ENCODE measurements at regions of chr2 and their contacts with region 1.

Region 1: GRCh38 chr2:85327822-85328617 is at the start of gene TGOLN2:
- DNase-seq: peak; percentile 93 to 96 (median 95)
- H3K4me3 ChIP-seq: peak within 1 kb of the TSS; percentile 99 to 100
- H3K4me3 Mint-ChIP-seq: peak within 1 kb of the TSS; percentile 92 to 100 (median 98)
- H3K27ac ChIP-seq: peak within 1 kb of the TSS; percentile 98
- H3K27ac Mint-ChIP-seq: peak within 1 kb of the TSS; percentile 97 to 100 (median 100)
- H3K4me1 ChIP-seq: peaks cover 44% of the 10 kb centered on the region
- H3K4me1 Mint-ChIP-seq: peaks cover 21 to 65% (median 34%) of the 10 kb centered on the region in 4 donors
- H3K27me3 ChIP-seq: no peaks in the 10 kb centered on the region
- H3K27me3 Mint-ChIP-seq: no peaks in the 10 kb centered on the region
- total RNA-seq, gene TGOLN2: 188 to 195 TPM

Region 2: GRCh38 chr2:85278361-85278760 is 49.7 kb before region 1 on chr2:
- CTCF ChIA-PET with region 1: no interaction called
- POLR2A ChIA-PET with region 1: no interaction called
- intact Hi-C with region 1: no loop called
- DNase-seq: no peak
- H3K4me3 ChIP-seq: no peak overlapping the region
- H3K4me3 Mint-ChIP-seq: no peak overlapping the region
- H3K27ac ChIP-seq: no peak overlapping the region
- H3K27ac Mint-ChIP-seq: no peak overlapping the region
- H3K4me1 ChIP-seq: no peaks in the 10 kb centered on the region
- H3K4me1 Mint-ChIP-seq: no peaks in the 10 kb centered on the region
- H3K27me3 ChIP-seq: no peaks in the 10 kb centered on the region
- H3K27me3 Mint-ChIP-seq: peaks cover 2 to 3% of the 10 kb centered on the region in 2 donors

Region 3: GRCh38 chr2:85302121-85302520 is 25.9 kb before region 1 on chr2:
- CTCF ChIA-PET with region 1: interaction called, 28 read pairs
- POLR2A ChIA-PET with region 1: interaction called, 268 read pairs
- intact Hi-C with region 1: no loop called
- DNase-seq: no peak
- H3K4me3 ChIP-seq: no peak overlapping the region
- H3K4me3 Mint-ChIP-seq: no peak overlapping the region
- H3K27ac ChIP-seq: no peak overlapping the region
- H3K27ac Mint-ChIP-seq: no peak overlapping the region
- H3K4me1 ChIP-seq: peaks cover 3% of the 10 kb centered on the region
- H3K4me1 Mint-ChIP-seq: peaks cover 0 to 20% (median 14%) of the 10 kb centered on the region in 4 donors
- H3K27me3 ChIP-seq: peaks cover 5% of the 10 kb centered on the region
- H3K27me3 Mint-ChIP-seq: peaks cover 6 to 7% of the 10 kb centered on the region in 2 donors

Region 4: DNA sequence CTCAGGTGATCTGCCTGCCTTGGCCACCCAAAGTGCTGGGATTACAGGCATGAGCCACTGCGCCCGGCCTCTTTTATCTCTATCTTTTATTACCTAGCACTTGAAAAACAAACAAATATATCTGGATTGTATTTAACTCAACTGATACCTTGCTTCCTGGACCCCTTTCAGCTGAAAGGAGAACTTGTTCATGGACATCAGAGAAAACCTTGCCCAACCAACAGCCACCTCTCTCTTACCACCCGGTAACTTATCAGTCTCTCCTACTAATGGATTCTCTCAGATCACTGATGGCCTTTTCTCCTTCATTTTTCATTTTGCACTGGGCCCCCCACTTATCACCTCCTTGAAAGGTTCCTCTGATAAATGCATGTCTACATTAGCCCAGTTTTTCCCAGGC is 19.6 kb after region 1 on chr2:
- CTCF ChIA-PET with region 1: interaction called, 3 read pairs
- POLR2A ChIA-PET with region 1: interaction called, 240 read pairs
- intact Hi-C with region 1: no loop called
- DNase-seq: no peak
- H3K4me3 ChIP-seq: no peak overlapping the region
- H3K4me3 Mint-ChIP-seq: no peak overlapping the region
- H3K27ac ChIP-seq: no peak overlapping the region
- H3K27ac Mint-ChIP-seq: peak overlapping the region in 2 of 7 donors; percentile 46 to 69
- H3K4me1 ChIP-seq: peaks cover 3% of the 10 kb centered on the region
- H3K4me1 Mint-ChIP-seq: peaks cover 2 to 14% (median 10%) of the 10 kb centered on the region in 4 donors
- H3K27me3 ChIP-seq: no peaks in the 10 kb centered on the region
- H3K27me3 Mint-ChIP-seq: no peaks in the 10 kb centered on the region

Region 5: DNA sequence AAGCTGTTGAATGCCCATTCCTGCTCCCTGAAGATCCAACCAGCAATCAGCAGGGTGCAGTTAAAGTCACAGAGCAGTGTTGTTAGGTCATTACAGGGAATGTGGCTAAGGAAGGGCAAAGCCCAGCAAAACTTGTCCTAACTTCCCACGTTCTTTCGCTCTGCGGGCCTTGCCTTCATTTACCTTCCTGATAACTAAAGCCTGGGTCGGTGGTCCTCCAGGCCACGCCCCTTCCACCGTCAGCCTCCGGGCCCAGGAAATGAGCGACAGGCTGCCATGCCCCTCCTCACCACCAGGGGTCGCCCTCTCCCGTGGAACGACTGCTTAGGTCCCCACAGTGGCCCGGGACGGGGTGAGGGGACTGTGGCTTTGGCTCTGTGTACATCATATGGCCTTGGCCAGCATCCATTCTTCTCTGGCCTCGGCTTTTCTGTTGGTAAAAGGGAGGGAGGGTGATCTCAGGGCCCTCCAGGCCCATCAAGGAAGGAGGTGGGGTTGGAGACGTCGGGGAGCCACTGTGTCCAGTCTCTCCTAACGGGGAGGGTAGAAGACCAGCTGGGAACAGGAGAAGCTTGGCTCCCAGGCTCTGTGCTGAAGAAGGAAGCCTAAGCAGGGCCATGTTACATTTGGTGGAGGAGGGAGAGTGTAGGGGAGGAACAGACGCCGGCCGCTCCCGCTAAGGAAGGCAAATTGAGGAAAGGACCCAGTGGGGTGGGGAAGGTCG is 92.7 kb after region 1 on chr2:
- CTCF ChIA-PET with region 1: interaction called, 9 read pairs
- POLR2A ChIA-PET with region 1: interaction called, 29 read pairs
- intact Hi-C with region 1: loop called (anchors 1 kb)
- DNase-seq: peak; percentile 81 to 87 (median 81)
- H3K4me3 ChIP-seq: no peak overlapping the region
- H3K4me3 Mint-ChIP-seq: peak overlapping the region; percentile 72 to 84 (median 78)
- H3K27ac ChIP-seq: peak overlapping the region; percentile 12
- H3K27ac Mint-ChIP-seq: peak overlapping the region; percentile 76 to 93 (median 90)
- H3K4me1 ChIP-seq: peaks cover 28% of the 10 kb centered on the region
- H3K4me1 Mint-ChIP-seq: peaks cover 12 to 29% (median 19%) of the 10 kb centered on the region in 4 donors
- H3K27me3 ChIP-seq: no peaks in the 10 kb centered on the region
- H3K27me3 Mint-ChIP-seq: no peaks in the 10 kb centered on the region

Region 6: GRCh38 chr2:85551698-85552678 is 224.0 kb after region 1 on chr2:
- CTCF ChIA-PET with region 1: interaction called, 3 read pairs
- POLR2A ChIA-PET with region 1: interaction called, 16 read pairs
- intact Hi-C with region 1: loop called (anchors 2 kb)
- DNase-seq: peak; percentile 86 to 90 (median 87)
- H3K4me3 ChIP-seq: no peak overlapping the region
- H3K4me3 Mint-ChIP-seq: no peak overlapping the region
- H3K27ac ChIP-seq: no peak overlapping the region
- H3K27ac Mint-ChIP-seq: peak overlapping the region; percentile 22 to 70 (median 47)
- H3K4me1 ChIP-seq: no peaks in the 10 kb centered on the region
- H3K4me1 Mint-ChIP-seq: peaks cover 0 to 7% (median 4%) of the 10 kb centered on the region in 4 donors
- H3K27me3 ChIP-seq: no peaks in the 10 kb centered on the region
- H3K27me3 Mint-ChIP-seq: no peaks in the 10 kb centered on the region

Region 7: DNA sequence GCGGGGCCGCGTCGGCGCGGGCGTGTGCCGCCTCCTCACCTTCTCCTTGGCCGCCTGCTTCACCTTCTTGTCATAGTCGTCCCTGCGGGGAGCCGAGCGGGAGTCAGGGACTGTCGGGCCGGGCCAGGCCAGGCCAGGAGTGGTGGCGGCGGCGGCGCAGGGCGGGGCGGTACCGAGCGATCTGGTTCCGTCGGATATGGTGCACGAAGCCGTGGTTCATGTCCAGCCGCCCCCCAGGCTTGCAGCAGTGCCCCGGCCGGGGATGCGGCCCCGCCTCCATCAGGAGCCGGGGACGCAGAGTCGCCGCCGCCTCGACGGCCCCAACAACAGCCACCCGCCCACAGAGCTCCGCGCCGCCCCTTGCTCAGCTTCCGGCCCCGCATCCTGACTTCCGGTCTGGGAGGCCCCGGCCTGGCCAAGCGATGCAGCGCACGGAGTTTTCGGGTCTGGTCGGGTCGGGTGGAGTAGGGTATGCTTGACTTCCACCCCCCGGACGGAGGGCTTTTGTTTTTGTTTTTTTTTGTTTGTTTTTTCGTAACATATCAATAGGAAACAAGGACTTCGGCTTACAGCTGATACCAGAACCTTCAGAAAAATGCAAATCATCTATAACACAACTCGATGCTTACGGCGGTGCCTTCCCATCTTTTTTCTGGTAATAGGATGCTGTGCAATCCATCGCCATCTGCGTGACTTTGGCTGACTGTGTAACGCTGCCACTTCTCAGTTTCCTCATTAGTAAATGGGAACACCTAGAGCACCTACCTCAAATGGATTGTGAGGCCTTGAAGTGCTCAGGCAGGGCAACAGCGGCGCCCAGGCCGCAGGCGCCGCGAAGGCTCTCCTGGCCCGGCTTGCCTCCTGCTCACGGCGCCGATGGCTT is 283.9 kb after region 1 on chr2 and contains the start of gene C2orf68:
- CTCF ChIA-PET with region 1: no interaction called
- POLR2A ChIA-PET with region 1: interaction called, 11 read pairs
- intact Hi-C with region 1: loop called (anchors 10 kb)
- DNase-seq: peak; percentile 77 to 86 (median 77)
- H3K4me3 ChIP-seq: peak within 1 kb of the TSS; percentile 57 to 86
- H3K4me3 Mint-ChIP-seq: peak within 1 kb of the TSS; percentile 96 to 100 (median 98)
- H3K27ac ChIP-seq: peak within 1 kb of the TSS; percentile 72
- H3K27ac Mint-ChIP-seq: peak within 1 kb of the TSS; percentile 94 to 97 (median 97)
- H3K4me1 ChIP-seq: peaks cover 30% of the 10 kb centered on the region
- H3K4me1 Mint-ChIP-seq: peaks cover 13 to 41% (median 25%) of the 10 kb centered on the region in 4 donors
- H3K27me3 ChIP-seq: no peaks in the 10 kb centered on the region
- H3K27me3 Mint-ChIP-seq: no peaks in the 10 kb centered on the region
- total RNA-seq, gene C2orf68: 87.3 to 89.9 TPM

Region 8: GRCh38 chr2:85678794-85679672 is 351.0 kb after region 1 on chr2:
- CTCF ChIA-PET with region 1: no interaction called
- POLR2A ChIA-PET with region 1: no interaction called
- intact Hi-C with region 1: no loop called
- DNase-seq: peak; percentile 64 to 75 (median 68)
- H3K4me3 ChIP-seq: no peak overlapping the region
- H3K4me3 Mint-ChIP-seq: peak overlapping the region in 5 of 8 donors; percentile 20 to 52 (median 33)
- H3K27ac ChIP-seq: no peak overlapping the region
- H3K27ac Mint-ChIP-seq: no peak overlapping the region
- H3K4me1 ChIP-seq: peaks cover 4% of the 10 kb centered on the region
- H3K4me1 Mint-ChIP-seq: peaks cover 0 to 5% (median under 1%) of the 10 kb centered on the region in 4 donors
- H3K27me3 ChIP-seq: no peaks in the 10 kb centered on the region
- H3K27me3 Mint-ChIP-seq: peaks cover 0 to 2% of the 10 kb centered on the region in 2 donors

Measured in CD4-positive, alpha-beta memory T cell (primary cell).